A549 (cell line): ENCODE measurements at regions of chr15 and their contacts with region 1.

Region 1: DNA sequence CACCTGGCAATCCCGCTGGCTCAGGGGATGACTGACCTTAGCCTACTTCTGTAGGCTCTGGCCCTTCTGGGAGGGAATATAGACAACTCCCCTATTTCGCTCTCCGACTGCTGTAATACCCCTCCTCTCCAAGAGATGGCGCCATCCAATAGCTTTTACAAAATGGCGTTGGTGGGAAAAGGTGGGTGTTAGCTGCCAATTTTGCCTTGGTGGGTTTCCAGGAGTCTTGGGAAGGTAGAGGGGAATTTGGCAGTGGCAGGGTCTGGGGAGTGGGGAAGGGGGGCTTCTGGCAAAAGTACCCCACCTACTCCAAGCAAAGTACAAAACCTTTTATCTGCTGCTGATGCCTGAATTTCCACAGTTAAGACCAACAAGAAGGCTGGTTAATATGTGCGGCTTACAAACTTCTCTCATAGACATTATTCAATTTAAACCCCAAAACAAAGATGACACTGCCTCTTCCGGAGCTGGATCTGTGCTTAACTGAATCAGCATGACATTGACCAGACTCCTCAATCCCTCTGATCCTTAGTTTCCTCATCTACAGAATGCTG is 62.1 kb downstream of the RASGRF1 start:
- DNase-seq: peak; percentile 51 to 54
- ATAC-seq: peak in 1 of 2 experiments; percentile 77; a peak in 3 of 6 replicates
- H3K4me3 ChIP-seq: no peak overlapping the region
- H3K27ac ChIP-seq: no peak overlapping the region
- H3K4me1 ChIP-seq: no peaks in the 10 kb centered on the region
- CTCF ChIP-seq: peak; percentile 92
- EP300 ChIP-seq: no peak
- POLR2A ChIP-seq: no peak
- RAD21 ChIP-seq: peak; percentile 92 to 98

Region 2: GRCh38 chr15:79041601-79042168 is 13.2 kb after region 1 on chr15:
- CTCF ChIA-PET with region 1: interaction called, 22 read pairs
- POLR2A ChIA-PET with region 1: no interaction called
- DNase-seq: no peak
- ATAC-seq: no peak
- H3K4me3 ChIP-seq: no peak overlapping the region
- H3K27ac ChIP-seq: no peak overlapping the region
- H3K4me1 ChIP-seq: no peaks in the 10 kb centered on the region
- CTCF ChIP-seq: no peak
- EP300 ChIP-seq: no peak
- POLR2A ChIP-seq: no peak
- RAD21 ChIP-seq: no peak

Region 3: DNA sequence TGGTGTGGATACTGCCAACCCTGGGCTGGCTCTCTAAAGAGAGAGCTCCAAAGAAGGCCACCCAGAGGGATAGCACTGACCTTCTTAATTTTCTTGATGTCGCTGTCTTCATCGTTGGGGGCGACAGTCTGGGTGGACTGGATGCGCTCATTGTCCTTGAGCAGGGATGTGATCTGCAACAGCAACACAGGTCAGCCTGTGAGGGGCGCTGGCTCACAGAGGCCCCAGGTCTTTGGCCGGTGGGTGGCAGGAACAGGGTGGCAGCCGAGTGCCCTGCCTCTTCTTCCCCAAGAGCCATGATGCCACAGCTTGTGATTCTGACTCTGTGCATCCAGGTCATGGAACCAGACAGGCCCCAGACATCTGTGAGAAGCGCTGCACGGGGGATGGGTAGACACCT is 20.9 kb after region 1 on chr15:
- CTCF ChIA-PET with region 1: interaction called, 22 read pairs
- POLR2A ChIA-PET with region 1: no interaction called
- DNase-seq: no peak
- ATAC-seq: no peak
- H3K4me3 ChIP-seq: no peak overlapping the region
- H3K27ac ChIP-seq: no peak overlapping the region
- H3K4me1 ChIP-seq: no peaks in the 10 kb centered on the region
- CTCF ChIP-seq: no peak
- EP300 ChIP-seq: no peak
- POLR2A ChIP-seq: no peak
- RAD21 ChIP-seq: no peak

Region 4: DNA sequence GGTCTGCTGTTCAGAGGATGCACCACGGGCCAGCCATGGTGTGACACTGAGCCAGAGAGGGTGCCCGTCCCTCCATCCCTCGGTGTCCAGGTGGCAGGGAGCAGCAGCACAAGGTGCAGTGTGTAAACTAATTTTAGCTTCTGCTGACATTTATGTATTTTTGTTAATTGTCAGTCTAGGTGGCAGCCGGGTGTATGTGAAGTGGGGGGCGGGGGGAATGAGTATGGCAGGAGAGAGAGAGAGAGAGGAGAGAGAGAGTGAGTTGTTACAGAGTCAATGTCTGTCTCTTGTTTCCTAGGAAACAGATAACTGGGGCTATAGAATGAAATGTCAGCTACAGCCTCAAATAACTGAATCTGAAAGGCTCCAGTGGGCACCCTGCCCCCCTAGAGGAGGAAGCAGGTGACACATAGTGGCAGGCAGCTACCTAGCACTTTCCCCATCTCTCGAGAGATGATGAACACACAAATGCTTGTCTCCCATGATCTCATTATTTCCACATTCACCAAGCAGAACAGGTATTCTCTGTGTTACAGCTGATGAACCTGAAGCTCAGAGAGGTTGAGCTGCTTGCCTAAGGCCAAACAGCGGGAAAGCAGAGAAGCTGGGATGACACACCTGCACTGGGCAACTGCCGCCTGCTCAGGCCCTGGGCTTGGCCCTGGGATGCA is 37.4 kb after region 1 on chr15:
- CTCF ChIA-PET with region 1: interaction called, 12 read pairs
- POLR2A ChIA-PET with region 1: no interaction called
- DNase-seq: no peak
- ATAC-seq: peak in 1 of 2 experiments; percentile 27; a peak in 1 of 6 replicates
- H3K4me3 ChIP-seq: no peak overlapping the region
- H3K27ac ChIP-seq: no peak overlapping the region
- H3K4me1 ChIP-seq: no peaks in the 10 kb centered on the region
- CTCF ChIP-seq: no peak
- EP300 ChIP-seq: no peak
- POLR2A ChIP-seq: no peak
- RAD21 ChIP-seq: no peak

Region 5: GRCh38 chr15:79160211-79160610 is 131.7 kb after region 1 on chr15:
- CTCF ChIA-PET with region 1: interaction called, 13 read pairs
- POLR2A ChIA-PET with region 1: no interaction called
- DNase-seq: no peak
- ATAC-seq: no peak
- H3K4me3 ChIP-seq: no peak overlapping the region
- H3K27ac ChIP-seq: no peak overlapping the region
- H3K4me1 ChIP-seq: no peaks in the 10 kb centered on the region
- CTCF ChIP-seq: no peak
- EP300 ChIP-seq: no peak
- POLR2A ChIP-seq: no peak
- RAD21 ChIP-seq: no peak

Region 6: GRCh38 chr15:79209690-79210089 is 181.2 kb after region 1 on chr15:
- CTCF ChIA-PET with region 1: interaction called, 12 read pairs
- POLR2A ChIA-PET with region 1: no interaction called
- DNase-seq: no peak
- ATAC-seq: no peak
- H3K4me3 ChIP-seq: no peak overlapping the region
- H3K27ac ChIP-seq: no peak overlapping the region
- H3K4me1 ChIP-seq: no peaks in the 10 kb centered on the region
- CTCF ChIP-seq: no peak
- EP300 ChIP-seq: no peak
- POLR2A ChIP-seq: no peak
- RAD21 ChIP-seq: no peak